T-cell (primary cell): ENCODE measurements at regions of chr6 and their contacts with region 1.

Region 1: DNA sequence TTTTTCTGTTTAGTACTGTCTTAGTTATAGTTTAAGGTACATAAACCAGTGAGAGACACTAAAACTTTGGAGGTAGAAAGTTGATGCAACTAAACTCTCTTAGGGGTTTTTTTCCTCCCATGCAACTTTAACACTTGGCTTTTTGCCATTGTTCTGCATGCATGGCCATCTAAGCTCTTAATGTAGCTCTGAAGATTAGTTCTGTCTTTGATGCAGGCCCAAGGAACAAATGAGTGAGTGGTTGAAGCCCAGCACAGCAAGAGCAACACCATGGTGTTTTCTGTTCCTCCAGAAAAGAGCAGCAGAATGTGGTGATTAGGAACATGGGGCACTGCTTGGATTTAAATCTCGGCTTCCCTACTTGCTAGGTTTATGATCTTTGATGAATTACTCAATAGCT is 89.3 kb downstream of the L3MBTL3 start:
- DNase-seq: no peak
- ATAC-seq: no peak
- H3K4me3 ChIP-seq: no peak overlapping the region
- H3K4me3 Mint-ChIP-seq: no peak overlapping the region
- H3K27ac ChIP-seq: no peak overlapping the region
- H3K27ac Mint-ChIP-seq: peak overlapping the region; percentile 33 to 73
- H3K4me1 ChIP-seq: no peaks in the 10 kb centered on the region
- H3K4me1 Mint-ChIP-seq: peaks cover 12 to 27% (median 17%) of the 10 kb centered on the region in 3 donors
- H3K27me3 ChIP-seq: no peaks in the 10 kb centered on the region
- H3K27me3 Mint-ChIP-seq: no peaks in the 10 kb centered on the region

Region 2: DNA sequence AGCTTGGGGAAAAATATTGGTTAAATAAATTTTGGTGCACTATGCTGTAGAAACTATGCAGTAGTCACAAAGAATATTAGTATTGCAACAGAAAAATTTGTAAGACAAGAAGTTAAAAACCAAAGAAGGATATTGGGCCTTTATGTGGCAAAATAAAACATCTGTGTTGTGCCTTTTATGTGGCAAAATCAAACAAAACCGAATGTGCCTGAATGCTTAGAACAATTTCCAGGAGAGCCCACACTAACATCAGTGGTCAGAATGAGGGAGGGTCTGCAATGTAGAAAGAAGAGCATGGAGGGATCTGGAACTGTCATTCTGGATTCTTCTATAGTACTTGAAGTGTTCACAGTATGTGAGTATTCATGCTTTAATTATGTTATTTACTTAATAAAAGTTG is 14.2 kb before region 1 on chr6:
- CTCF ChIA-PET with region 1: no interaction called
- POLR2A ChIA-PET with region 1: no interaction called
- DNase-seq: no peak
- ATAC-seq: no peak
- H3K4me3 ChIP-seq: no peak overlapping the region
- H3K4me3 Mint-ChIP-seq: no peak overlapping the region
- H3K27ac ChIP-seq: no peak overlapping the region
- H3K27ac Mint-ChIP-seq: no peak overlapping the region
- H3K4me1 ChIP-seq: peaks cover 0 to 8% of the 10 kb centered on the region in 2 experiments
- H3K4me1 Mint-ChIP-seq: peaks cover 16 to 25% (median 20%) of the 10 kb centered on the region in 3 donors
- H3K27me3 ChIP-seq: no peaks in the 10 kb centered on the region
- H3K27me3 Mint-ChIP-seq: no peaks in the 10 kb centered on the region

Region 3: DNA sequence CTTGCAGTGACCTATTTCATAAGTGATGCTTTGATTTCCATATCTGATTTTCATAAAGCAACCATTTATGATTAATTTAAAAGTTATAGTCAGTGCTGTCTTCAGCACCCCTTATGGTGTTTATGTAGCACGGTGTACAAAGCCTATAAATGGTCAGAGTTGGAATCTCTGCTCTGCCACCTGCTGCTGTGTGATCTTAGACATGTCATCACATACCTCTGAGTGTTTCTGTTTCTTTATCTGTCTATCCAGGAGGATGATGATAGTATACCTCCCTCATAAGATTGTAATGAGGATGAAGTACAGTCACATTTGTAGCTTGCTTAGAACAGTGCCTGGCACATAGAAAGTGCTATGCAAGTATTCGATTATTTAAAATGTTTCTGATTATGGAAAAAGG is 14.5 kb after region 1 on chr6:
- CTCF ChIA-PET with region 1: no interaction called
- POLR2A ChIA-PET with region 1: interaction called, 3 to 13 read pairs
- DNase-seq: no peak
- ATAC-seq: no peak
- H3K4me3 ChIP-seq: no peak overlapping the region
- H3K4me3 Mint-ChIP-seq: no peak overlapping the region
- H3K27ac ChIP-seq: no peak overlapping the region
- H3K27ac Mint-ChIP-seq: peak overlapping the region in 1 of 2 donors; percentile 62
- H3K4me1 ChIP-seq: peaks cover 0 to 2% of the 10 kb centered on the region in 2 experiments
- H3K4me1 Mint-ChIP-seq: peaks cover 40 to 49% (median 44%) of the 10 kb centered on the region in 3 donors
- H3K27me3 ChIP-seq: no peaks in the 10 kb centered on the region
- H3K27me3 Mint-ChIP-seq: no peaks in the 10 kb centered on the region

Region 4: DNA sequence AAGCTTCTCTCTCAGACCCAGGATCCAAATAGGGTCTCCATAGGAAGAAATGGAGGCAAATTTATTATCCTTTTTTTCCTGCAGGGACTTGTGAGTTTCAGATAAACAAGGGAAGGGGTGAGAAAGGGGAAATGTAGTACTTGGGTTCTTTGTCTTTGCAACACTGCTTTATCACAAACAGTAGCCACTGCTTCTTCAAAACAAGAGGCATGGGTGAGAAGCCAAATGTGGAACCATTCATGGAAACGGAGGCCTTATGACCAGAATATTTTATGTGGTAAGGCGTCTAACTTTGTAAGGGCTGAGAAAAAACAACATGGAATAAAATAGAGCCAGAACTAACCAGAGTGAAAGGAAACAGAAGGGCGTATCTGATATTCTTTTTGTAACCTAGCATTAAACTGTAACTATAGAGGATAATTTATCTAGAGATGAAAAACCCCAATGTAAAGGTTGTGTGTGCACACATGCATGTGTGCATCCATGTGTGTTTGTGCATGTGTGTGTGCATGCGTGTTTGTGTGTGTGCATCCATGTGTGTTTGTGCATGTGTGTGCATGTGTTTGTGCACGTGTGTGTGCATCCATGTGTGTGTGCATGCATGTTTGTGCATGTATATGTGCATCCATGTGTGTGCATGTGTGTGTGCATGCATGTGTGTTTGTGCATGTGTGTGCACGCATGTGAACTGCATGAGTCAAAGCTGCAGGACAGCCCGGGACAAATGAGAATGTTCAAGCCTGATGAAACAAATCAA is 576.2 kb after region 1 on chr6:
- CTCF ChIA-PET with region 1: no interaction called
- POLR2A ChIA-PET with region 1: no interaction called
- DNase-seq: no peak
- ATAC-seq: no peak
- H3K4me3 ChIP-seq: no peak overlapping the region
- H3K4me3 Mint-ChIP-seq: no peak overlapping the region
- H3K27ac ChIP-seq: no peak overlapping the region
- H3K27ac Mint-ChIP-seq: no peak overlapping the region
- H3K4me1 ChIP-seq: no peaks in the 10 kb centered on the region
- H3K4me1 Mint-ChIP-seq: peaks cover 0 to 2% (median 0%) of the 10 kb centered on the region in 3 donors
- H3K27me3 ChIP-seq: no peaks in the 10 kb centered on the region
- H3K27me3 Mint-ChIP-seq: no peaks in the 10 kb centered on the region